Aorta (tissue), 5 donors: ENCODE measurements at regions of chr2 and their contacts with region 1.

Region 1: GRCh38 chr2:43219383-43220228 is 6.8 kb downstream of the ZFP36L2 start:
- DNase-seq: peak; percentile 94 to 95
- ATAC-seq: peak; percentile 81
- H3K4me3 ChIP-seq: no peak overlapping the region
- H3K27ac ChIP-seq: peak overlapping the region; percentile 89 to 94
- H3K4me1 ChIP-seq: no peaks in the 10 kb centered on the region
- H3K27me3 ChIP-seq: no peaks in the 10 kb centered on the region

Region 2: DNA sequence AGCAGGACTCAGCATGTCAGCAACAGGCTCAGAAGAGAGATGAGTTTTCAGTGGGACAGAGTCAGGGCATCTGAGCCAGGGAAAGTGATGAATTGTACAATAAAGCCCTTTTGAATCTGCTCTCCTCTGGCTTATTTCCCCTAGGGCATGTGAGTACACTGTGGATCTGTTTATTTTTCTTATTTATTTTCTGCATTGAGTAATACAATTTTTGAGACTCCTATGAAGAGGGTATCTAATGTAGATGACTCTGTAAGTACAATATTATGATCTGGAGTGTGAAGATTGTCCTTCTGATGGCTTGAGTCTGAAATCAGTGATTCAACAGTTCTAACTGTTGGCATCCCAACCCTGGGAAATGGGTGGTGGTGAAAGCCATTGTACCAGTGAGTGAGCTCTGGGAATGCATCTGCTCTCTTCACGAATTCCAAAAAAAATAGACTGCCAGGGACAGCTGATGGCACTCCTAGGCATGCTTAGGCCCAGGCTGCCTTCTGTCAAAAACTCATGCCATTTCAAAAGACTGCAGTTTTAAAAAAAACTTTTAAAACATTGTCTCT is 476.1 kb before region 1 on chr2:
- intact Hi-C with region 1: no loop called
- DNase-seq: no peak
- ATAC-seq: no peak
- H3K4me3 ChIP-seq: no peak overlapping the region
- H3K27ac ChIP-seq: no peak overlapping the region
- H3K4me1 ChIP-seq: no peaks in the 10 kb centered on the region
- H3K27me3 ChIP-seq: no peaks in the 10 kb centered on the region

Region 3: GRCh38 chr2:42859006-42859552 is 360.5 kb before region 1 on chr2:
- intact Hi-C with region 1: loop called (anchors 5 to 10 kb)
- DNase-seq: no peak
- ATAC-seq: no peak
- H3K4me3 ChIP-seq: no peak overlapping the region
- H3K27ac ChIP-seq: no peak overlapping the region
- H3K4me1 ChIP-seq: no peaks in the 10 kb centered on the region
- H3K27me3 ChIP-seq: no peaks in the 10 kb centered on the region

Region 4: GRCh38 chr2:43086451-43087221 is 133.0 kb before region 1 on chr2:
- intact Hi-C with region 1: loop called in 1 of 2 experiments (anchors 5 kb)
- DNase-seq: peak; percentile 85 to 89
- ATAC-seq: peak; percentile 92
- H3K4me3 ChIP-seq: no peak overlapping the region
- H3K27ac ChIP-seq: peak overlapping the region; percentile 94 to 99
- H3K4me1 ChIP-seq: peaks cover 0 to 6% of the 10 kb centered on the region in 2 donors
- H3K27me3 ChIP-seq: no peaks in the 10 kb centered on the region

Region 5: DNA sequence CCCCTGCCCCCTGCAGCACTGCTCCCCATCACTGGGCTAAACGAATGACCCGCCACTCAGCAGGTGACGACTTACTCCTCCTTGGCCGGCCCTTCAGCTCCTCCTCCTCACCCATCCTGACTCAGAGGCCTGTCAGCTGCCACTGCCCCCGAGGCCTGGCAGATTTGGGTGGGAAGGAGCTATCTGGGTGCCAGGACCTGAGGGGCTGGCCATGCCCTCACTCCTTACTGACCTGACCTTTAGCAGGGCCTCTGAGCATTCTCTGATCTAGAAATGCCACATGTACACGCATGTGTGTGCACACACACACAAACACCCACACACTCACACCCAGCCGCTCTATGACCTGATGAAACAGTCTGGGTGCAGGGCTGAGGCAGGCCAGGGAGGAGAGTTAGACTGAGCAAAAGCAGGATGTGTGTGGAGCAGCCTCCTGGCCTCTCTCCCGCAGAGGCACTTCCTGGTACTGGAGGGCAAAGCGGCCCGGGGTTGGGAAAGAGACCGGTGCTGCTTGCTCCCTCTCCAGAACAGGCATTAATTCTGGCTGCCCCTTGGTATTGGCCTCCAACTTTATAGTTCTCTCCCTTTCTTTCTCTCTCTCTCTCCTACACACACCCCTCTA is 61.2 kb before region 1 on chr2:
- intact Hi-C with region 1: loop called (anchors 2 to 5 kb)
- DNase-seq: peak; percentile 87 to 90
- ATAC-seq: peak; percentile 72
- H3K4me3 ChIP-seq: no peak overlapping the region
- H3K27ac ChIP-seq: peak overlapping the region; percentile 80 to 95
- H3K4me1 ChIP-seq: peaks cover 0 to 4% of the 10 kb centered on the region in 2 donors
- H3K27me3 ChIP-seq: no peaks in the 10 kb centered on the region

Region 6: GRCh38 chr2:43455731-43456642 is 236.4 kb after region 1 on chr2:
- intact Hi-C with region 1: no loop called
- DNase-seq: no peak
- ATAC-seq: no peak
- H3K4me3 ChIP-seq: no peak overlapping the region
- H3K27ac ChIP-seq: no peak overlapping the region
- H3K4me1 ChIP-seq: peaks cover 5 to 15% of the 10 kb centered on the region in 2 donors
- H3K27me3 ChIP-seq: no peaks in the 10 kb centered on the region

Region 7: GRCh38 chr2:43467891-43468290 is 248.3 kb after region 1 on chr2:
- intact Hi-C with region 1: no loop called
- DNase-seq: no peak
- ATAC-seq: no peak
- H3K4me3 ChIP-seq: no peak overlapping the region
- H3K27ac ChIP-seq: no peak overlapping the region
- H3K4me1 ChIP-seq: peaks cover 4 to 5% of the 10 kb centered on the region in 2 donors
- H3K27me3 ChIP-seq: no peaks in the 10 kb centered on the region

Region 8: GRCh38 chr2:43542285-43542937 is 322.8 kb after region 1 on chr2:
- intact Hi-C with region 1: loop called in 1 of 2 experiments (anchors 5 kb)
- DNase-seq: no peak
- ATAC-seq: peak; percentile 72
- H3K4me3 ChIP-seq: no peak overlapping the region
- H3K27ac ChIP-seq: no peak overlapping the region
- H3K4me1 ChIP-seq: peaks cover 2 to 17% of the 10 kb centered on the region in 2 donors
- H3K27me3 ChIP-seq: no peaks in the 10 kb centered on the region